ENCODE measurements at regions of chr11 and their contacts with region 1.

Region 1: DNA sequence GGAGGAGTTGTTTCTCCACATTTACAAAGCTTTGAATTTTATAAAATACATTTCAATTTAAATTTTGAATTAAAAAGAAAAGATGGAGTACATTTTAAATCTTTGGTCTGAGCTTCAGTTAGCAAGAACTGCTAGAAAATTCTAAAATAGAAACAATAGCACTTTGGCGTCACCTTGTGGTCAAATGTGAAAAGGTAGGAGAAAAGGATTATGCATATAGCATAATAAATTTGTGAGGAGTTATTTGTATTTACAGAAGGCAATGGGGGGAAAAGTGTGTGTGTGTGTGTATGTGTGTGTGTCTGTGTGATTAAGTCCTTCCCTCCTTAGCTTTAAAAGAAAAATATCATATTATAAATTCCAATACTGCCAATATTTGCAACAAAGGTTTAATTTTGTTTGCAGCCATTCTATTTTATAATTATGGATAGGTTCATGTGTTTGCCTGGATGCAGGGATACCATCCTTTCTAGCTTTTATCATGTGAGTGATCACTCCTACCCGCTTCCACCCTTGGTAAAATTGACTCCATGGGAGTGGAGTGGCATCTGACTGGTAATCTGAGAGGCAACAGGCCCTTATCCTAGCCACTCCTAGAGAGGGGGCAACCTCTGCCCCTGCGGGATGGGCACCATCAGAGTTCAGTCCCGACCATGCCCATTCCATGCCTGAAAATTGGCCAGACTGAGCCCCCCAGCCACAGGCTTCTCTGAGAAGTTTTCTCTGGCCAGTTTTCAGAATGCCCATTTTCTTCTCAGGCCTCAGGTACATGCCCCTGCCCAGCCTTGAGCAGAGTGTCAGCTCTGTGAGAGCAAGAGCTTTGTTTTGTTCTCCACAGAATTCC is 13.6 kb upstream of the LGR4 start:
- DNase-seq: no peak
- ATAC-seq: peak; percentile 54
- H3K4me3 Mint-ChIP-seq: no peak overlapping the region
- H3K27ac Mint-ChIP-seq: no peak overlapping the region
- H3K4me1 Mint-ChIP-seq: no peaks in the 10 kb centered on the region
- H3K27me3 Mint-ChIP-seq: no peaks in the 10 kb centered on the region
- CTCF ChIP-seq: peak; percentile 78

Region 2: DNA sequence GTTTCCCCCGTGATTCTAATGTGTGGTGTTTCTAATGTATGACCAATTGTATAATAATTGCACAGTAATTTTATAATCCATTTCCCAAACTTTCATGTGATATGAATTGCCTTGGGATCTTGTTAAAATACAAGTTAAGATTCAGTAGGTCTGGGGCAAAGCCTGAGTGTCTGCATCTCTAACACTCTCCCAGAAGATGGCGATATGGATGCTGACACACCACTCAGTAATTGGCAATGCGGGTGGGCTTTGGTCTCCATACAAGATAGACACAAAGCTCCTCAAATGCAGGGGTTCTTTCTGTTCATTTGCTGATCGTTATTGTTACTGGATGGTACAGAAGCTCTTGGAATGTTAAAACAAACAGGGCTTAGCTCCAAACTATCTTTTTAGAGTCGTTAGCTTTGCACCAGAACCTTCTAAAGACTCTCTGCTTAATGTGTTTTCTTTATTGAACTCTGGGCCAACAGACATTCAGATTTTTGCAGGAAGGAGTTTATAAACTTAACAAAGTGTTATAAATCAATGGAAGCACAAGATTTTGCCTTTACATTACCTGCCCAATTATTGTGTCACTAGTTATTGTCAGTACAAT is 1199.6 kb before region 1 on chr11:
- CTCF ChIA-PET with region 1: interaction called, 3 read pairs
- POLR2A ChIA-PET with region 1: no interaction called
- intact Hi-C with region 1: loop called (anchors 1 kb)
- DNase-seq: no peak
- ATAC-seq: no peak
- H3K4me3 Mint-ChIP-seq: no peak overlapping the region
- H3K27ac Mint-ChIP-seq: no peak overlapping the region
- H3K4me1 Mint-ChIP-seq: peaks cover 5% of the 10 kb centered on the region
- H3K27me3 Mint-ChIP-seq: peaks cover 4% of the 10 kb centered on the region
- CTCF ChIP-seq: no peak

Region 3: DNA sequence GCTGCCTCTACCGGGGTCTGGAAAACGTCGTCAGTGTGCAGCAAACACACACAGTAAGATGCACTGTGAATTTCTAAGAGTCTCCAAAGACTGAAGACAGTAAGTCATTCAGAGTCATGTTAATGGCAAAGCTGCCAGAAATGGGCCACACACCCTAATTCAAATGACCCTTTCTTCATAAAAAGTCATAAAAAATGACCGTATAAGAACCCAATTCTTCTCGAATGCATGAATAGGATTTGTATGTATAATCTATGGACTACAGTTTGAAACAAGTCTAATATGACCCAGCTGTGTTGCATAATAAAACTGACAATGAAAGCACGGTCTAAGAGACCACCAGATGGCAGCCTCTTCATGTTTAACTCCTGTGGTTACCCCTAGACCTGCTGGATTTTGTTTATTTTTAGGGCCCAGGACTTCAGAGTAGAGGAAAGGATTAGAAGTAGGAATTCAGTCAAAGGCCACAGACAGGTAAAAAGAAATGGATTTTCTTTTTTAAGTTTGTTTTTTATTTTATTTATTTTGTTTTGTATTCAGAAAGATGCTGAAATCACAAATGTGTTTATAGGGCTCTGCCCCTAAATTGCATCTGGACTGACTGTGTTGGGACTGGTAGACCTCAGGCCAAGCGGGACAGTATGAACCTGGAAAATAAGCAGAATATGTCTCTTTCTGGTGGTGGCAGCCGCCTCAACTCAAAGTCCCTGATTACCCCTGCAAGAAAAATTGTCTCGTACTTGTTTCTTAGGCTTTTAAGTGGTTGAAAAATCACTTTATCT is 732.2 kb before region 1 on chr11:
- CTCF ChIA-PET with region 1: interaction called, 4 read pairs
- POLR2A ChIA-PET with region 1: no interaction called
- intact Hi-C with region 1: loop called (anchors 1 kb)
- DNase-seq: no peak
- ATAC-seq: no peak
- H3K4me3 Mint-ChIP-seq: no peak overlapping the region
- H3K27ac Mint-ChIP-seq: no peak overlapping the region
- H3K4me1 Mint-ChIP-seq: no peaks in the 10 kb centered on the region
- H3K27me3 Mint-ChIP-seq: no peaks in the 10 kb centered on the region
- CTCF ChIP-seq: no peak

Region 4: GRCh38 chr11:27296497-27296896 is 189.7 kb before region 1 on chr11:
- CTCF ChIA-PET with region 1: interaction called, 4 read pairs
- POLR2A ChIA-PET with region 1: no interaction called
- intact Hi-C with region 1: loop called (anchors 5 kb)
- DNase-seq: no peak
- ATAC-seq: peak; percentile 54
- H3K4me3 Mint-ChIP-seq: no peak overlapping the region
- H3K27ac Mint-ChIP-seq: no peak overlapping the region
- H3K4me1 Mint-ChIP-seq: no peaks in the 10 kb centered on the region
- H3K27me3 Mint-ChIP-seq: peaks cover 3% of the 10 kb centered on the region
- CTCF ChIP-seq: no peak

Region 5: DNA sequence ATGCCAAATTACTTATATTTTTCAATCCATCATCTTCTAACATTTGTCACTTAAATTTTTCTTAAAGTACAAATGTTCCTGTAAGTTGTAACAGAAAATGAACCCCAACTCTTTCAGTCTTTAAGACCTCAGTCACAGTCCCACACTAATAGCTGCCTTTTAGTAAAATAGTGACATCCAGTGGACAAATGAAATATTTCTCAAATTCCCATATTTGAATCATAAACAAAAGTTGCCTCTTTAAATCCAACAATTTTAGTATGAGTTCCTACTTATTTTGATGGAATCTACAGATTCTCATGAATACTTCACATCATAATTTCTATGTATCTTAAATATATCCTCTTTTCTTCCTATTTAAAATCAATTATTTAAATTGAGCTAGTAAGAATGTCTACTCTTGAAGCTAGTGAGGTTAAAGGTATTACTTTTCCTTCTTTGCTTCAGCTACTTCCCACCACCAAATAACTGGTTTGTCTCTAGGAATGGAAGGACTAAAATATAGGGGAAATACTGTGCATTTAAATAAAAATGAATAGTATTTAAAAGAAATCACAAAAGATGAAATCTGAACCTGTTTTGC is 11.2 kb after region 1 on chr11:
- CTCF ChIA-PET with region 1: interaction called, 21 read pairs
- POLR2A ChIA-PET with region 1: no interaction called
- intact Hi-C with region 1: loop called (anchors 1 kb)
- DNase-seq: no peak
- ATAC-seq: peak; percentile 47
- H3K4me3 Mint-ChIP-seq: no peak overlapping the region
- H3K27ac Mint-ChIP-seq: no peak overlapping the region
- H3K4me1 Mint-ChIP-seq: peaks cover 3% of the 10 kb centered on the region
- H3K27me3 Mint-ChIP-seq: no peaks in the 10 kb centered on the region
- CTCF ChIP-seq: no peak

Measured in activated B cell treated with CpG ODN at 0.5 μM for 24 hours (primary cell).